ENCODE measurements at regions of chr14 and their contacts with region 1.

Region 1: DNA sequence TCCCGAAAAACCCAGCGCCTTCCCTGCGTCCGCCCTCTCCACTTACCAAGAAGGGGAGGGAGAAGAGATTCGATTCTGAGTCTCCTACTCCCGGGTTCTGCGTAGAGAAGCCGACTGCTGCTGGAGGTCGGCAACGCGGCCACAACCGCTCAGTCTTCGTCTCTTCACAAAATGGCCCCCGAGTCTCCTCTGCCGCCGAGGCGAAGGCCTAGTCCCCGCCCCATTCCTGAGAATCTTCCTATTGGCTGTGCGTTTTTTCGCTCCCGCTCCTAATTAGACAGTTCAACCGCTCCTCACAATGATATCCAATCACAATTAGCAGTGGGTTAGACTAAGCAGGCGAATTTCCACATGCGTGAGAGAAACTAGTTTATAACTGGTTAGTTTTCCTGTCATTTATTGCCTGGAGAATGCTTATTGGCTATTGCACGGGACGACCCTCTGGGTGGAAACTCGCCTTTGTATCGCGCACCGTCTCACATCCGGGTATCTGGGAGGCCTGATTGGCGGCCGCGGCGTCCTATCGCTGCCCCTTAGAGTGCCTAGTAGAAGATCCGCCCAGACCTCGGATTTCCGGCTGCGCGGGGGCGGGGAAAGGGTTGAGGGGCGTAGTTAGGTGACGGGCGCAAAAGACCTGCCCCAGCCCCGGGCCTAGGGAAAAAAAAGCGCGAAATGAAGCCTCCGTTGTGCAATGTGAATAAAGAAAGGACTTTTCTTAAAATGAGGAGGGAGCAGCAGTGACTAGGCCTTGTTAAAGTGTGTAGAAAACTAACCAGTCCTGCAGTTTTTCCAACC is at the start of gene HNRNPC:
- DNase-seq: peak; percentile 100
- ATAC-seq: peak; percentile 89
- H3K4me3 Mint-ChIP-seq: peak within 1 kb of the TSS; percentile 93
- H3K27ac Mint-ChIP-seq: peak within 1 kb of the TSS; percentile 100
- H3K4me1 Mint-ChIP-seq: peaks cover 25% of the 10 kb centered on the region
- H3K27me3 Mint-ChIP-seq: no peaks in the 10 kb centered on the region
- total RNA-seq, gene HNRNPC: 1,155 to 1,665 TPM

Region 2: DNA sequence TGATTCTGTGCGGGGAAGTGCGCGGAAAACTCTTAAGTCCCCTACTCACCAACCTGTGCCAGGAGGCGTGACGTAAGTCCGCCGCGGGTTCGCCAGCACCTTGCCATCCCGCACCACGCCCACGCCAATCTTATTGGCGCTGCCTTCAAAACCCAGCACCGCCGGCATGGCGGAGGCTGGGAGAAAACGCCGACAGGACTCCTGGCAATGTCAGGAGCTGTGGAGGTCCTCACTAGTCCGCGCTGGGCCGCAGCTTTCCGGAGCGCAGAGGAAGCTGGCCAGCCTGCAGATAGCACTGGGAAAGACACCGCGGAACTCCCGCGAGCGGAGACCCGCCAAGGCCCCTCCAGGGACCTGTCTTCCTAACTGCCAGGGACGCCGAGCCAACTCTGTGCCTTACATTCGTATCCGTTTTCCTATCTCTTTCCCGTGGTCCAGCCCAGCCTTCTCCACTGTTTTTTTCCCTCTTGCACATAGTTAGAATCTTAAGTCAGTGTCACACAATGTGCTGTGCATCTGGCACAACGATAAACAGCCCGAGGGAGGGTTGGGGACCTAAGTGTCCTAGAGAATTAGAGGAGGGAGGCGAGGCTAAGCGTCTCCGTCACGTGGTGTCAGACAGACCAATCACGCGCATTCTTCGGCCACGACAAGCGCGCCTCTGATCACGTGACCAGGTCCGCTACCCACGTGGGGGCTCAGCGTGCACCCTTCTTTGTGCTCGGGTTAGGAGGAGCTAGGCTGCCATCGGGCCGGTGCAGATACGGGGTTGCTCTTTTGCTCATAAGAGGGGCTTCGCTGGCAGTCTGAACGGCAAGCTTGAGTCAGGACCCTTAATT is 814.7 kb before region 1 on chr14 and contains the starts of genes APEX1 and OSGEP:
- CTCF ChIA-PET with region 1: no interaction called
- POLR2A ChIA-PET with region 1: no interaction called
- intact Hi-C with region 1: loop called in 1 of 2 experiments (anchors 2 kb)
- DNase-seq: peak; percentile 99
- ATAC-seq: peak; percentile 89
- H3K4me3 Mint-ChIP-seq: no peak within 1 kb of the TSS
- H3K27ac Mint-ChIP-seq: no peak within 1 kb of the TSS
- H3K4me1 Mint-ChIP-seq: peaks cover 18% of the 10 kb centered on the region
- H3K27me3 Mint-ChIP-seq: no peaks in the 10 kb centered on the region
- total RNA-seq, gene APEX1: 216 to 257 TPM
- total RNA-seq, gene OSGEP: 46.2 to 47.5 TPM

Region 3: GRCh38 chr14:21233457-21234076 is 35.9 kb before region 1 on chr14:
- CTCF ChIA-PET with region 1: no interaction called
- POLR2A ChIA-PET with region 1: interaction called, 4 read pairs
- intact Hi-C with region 1: loop called in 1 of 2 experiments (anchors 5 kb)
- DNase-seq: peak; percentile 32
- ATAC-seq: peak; percentile 28
- H3K4me3 Mint-ChIP-seq: peak overlapping the region; percentile 32
- H3K27ac Mint-ChIP-seq: peak overlapping the region; percentile 91
- H3K4me1 Mint-ChIP-seq: peaks cover 87% of the 10 kb centered on the region
- H3K27me3 Mint-ChIP-seq: no peaks in the 10 kb centered on the region

Region 4: DNA sequence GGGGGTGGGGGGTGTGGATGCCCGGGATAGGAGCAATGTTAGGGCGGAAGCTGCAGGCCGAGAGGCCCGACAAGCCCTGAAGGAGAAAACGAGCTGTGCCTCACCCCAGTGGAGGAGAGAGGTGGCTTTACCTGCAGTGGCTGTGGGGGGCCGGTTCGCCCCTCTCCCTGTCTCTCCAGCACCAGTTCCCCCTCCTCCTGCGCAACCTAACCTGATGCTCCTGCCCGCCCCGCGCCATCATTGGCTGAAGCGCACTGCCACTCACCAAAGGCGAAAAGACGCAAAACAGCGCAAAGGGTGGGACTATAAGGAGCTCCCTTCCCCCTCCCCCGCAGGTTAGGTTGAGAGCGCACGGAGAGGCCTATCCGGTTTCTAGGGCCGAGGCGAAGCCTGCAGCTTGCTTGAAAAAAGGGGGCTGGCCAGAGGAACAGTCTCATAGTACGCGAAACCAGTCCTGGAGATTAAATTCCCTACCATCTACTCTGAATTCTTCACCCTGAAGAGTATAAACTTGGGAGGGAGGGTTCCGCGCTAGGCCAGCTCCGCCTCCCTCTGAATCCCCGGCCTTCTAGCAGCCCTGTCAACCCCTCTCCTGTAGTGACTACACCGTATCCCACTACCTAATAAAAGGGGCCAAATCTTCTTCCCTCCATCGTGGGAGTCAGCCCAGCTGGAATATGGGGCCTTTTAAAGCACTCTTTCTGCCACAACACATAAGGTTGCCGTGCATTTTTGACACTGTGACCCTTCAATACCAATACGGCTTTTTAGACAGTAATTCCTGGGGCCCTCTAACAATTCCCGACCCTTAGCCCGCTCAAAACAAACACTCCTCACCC is 167.8 kb after region 1 on chr14:
- CTCF ChIA-PET with region 1: no interaction called
- POLR2A ChIA-PET with region 1: no interaction called
- intact Hi-C with region 1: loop called in 1 of 2 experiments (anchors 1 kb)
- DNase-seq: peak; percentile 99
- ATAC-seq: peak; percentile 99
- H3K4me3 Mint-ChIP-seq: peak overlapping the region; percentile 95
- H3K27ac Mint-ChIP-seq: peak overlapping the region; percentile 87
- H3K4me1 Mint-ChIP-seq: peaks cover 57% of the 10 kb centered on the region
- H3K27me3 Mint-ChIP-seq: no peaks in the 10 kb centered on the region

Region 5: GRCh38 chr14:21510735-21511657 is 241.5 kb after region 1 on chr14 and contains the start of gene METTL3:
- CTCF ChIA-PET with region 1: no interaction called
- POLR2A ChIA-PET with region 1: no interaction called
- intact Hi-C with region 1: loop called in 1 of 2 experiments (anchors 1 kb)
- DNase-seq: peak; percentile 96
- ATAC-seq: peak; percentile 99
- H3K4me3 Mint-ChIP-seq: peak within 1 kb of the TSS; percentile 97
- H3K27ac Mint-ChIP-seq: peak within 1 kb of the TSS; percentile 96
- H3K4me1 Mint-ChIP-seq: peaks cover 42% of the 10 kb centered on the region
- H3K27me3 Mint-ChIP-seq: no peaks in the 10 kb centered on the region
- total RNA-seq, gene METTL3: 64.0 to 67.4 TPM

Region 6: DNA sequence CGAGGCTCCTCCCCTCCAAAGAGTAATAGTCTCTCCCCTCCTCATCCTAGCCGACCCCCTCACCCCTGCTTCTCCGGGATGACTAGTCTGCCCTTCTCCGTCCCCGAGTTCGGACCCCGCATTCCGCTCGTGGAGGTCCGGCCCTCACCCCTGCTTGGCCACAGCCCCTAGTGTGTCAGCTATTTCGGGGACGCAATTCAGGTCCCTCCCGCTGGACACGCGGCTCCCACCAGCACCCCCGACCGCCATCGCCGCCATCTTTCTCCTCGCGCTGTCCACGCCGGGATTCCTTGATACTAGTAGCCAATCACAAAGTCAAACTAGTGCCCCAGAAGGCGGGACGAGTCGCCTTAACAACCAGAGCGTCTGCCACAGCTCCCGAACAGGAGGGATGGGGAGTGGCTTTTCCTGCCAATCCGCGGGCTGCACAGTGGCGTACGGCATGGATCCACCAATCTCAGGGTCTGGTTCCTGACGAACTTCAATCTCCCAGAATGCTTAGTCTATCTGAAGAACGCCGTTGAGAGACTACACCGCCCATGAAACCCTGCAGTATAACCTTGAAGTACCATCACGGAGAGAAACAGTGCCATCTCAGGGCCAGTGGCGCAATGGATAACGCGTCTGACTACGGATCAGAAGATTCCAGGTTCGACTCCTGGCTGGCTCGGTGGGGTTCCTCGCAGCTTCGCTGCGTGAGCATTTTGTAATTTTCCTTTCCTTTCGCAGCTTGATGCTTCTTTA is 1659.8 kb after region 1 on chr14 and contains the start of gene PRMT5:
- CTCF ChIA-PET with region 1: no interaction called
- POLR2A ChIA-PET with region 1: no interaction called
- intact Hi-C with region 1: loop called in 1 of 2 experiments (anchors 1 kb)
- DNase-seq: peak; percentile 99
- ATAC-seq: peak; percentile 98
- H3K4me3 Mint-ChIP-seq: no peak within 1 kb of the TSS
- H3K27ac Mint-ChIP-seq: no peak within 1 kb of the TSS
- H3K4me1 Mint-ChIP-seq: peaks cover 39% of the 10 kb centered on the region
- H3K27me3 Mint-ChIP-seq: no peaks in the 10 kb centered on the region
- total RNA-seq, gene PRMT5: 121 to 151 TPM

Measured in activated CD4-positive, alpha-beta T cell treated with anti-CD3 and anti-CD28 coated beads for 36 hours (primary cell).